ENCODE measurements at regions of chr6 and their contacts with region 1.

Region 1: GRCh38 chr6:99563056-99563723 is 5.3 kb downstream of the CCNC start:
- DNase-seq: no peak
- ATAC-seq: no peak
- H3K4me3 ChIP-seq: no peak overlapping the region
- H3K27ac ChIP-seq: peak overlapping the region in 1 of 12 donors; percentile 7
- H3K4me1 ChIP-seq: peaks cover 0 to 44% (median 23%) of the 10 kb centered on the region in 12 donors
- H3K27me3 ChIP-seq: no peaks in the 10 kb centered on the region
- CTCF ChIP-seq: no peak
- POLR2A ChIP-seq: no peak

Region 2: DNA sequence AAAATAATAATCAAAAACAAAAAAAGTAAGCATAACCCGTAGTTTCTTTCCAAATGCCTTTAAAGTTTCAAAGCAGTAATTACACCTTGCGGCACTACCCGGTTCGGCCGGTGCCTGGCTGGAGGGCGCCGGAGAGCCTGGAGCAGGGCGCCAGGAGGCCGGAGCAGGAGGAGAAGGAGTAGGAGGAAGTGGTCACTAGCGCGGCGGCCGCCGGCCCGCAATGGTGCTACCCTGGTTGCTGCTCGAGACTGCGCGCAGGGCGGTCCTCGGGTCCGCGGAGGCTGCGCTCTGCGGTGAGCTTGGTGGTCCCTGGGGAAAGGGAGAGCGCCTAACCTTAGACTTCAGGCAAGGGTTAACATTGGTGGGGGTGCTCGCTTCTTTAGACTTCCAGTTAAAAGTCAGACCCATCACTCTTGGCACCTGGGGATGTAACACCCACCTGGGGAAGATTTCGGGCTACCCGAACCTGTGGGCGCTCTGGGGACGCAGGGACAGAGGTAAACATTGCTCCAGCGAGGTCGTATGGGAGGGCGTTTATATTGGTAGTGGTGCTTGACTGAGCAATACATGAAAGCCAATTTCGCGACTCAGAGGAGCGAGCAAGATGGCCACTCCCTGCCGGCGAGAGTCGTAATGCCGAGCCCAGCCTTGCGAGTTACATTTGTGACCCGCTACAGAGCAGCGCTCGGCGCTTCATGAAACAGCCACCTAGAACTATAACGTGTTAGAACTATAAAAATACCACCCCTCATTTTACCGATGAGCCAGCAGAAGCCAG is 42.1 kb before region 1 on chr6:
- intact Hi-C with region 1: loop called in 8 of 10 experiments (anchors 1 to 10 kb)
- DNase-seq: peak; percentile 85 to 92 (median 89)
- ATAC-seq: peak; percentile 97 to 99 (median 98)
- H3K4me3 ChIP-seq: peak overlapping the region; percentile 34 to 93 (median 76)
- H3K27ac ChIP-seq: peak overlapping the region; percentile 40 to 93 (median 90)
- H3K4me1 ChIP-seq: peaks cover 0 to 32% (median 6%) of the 10 kb centered on the region in 12 donors
- H3K27me3 ChIP-seq: no peaks in the 10 kb centered on the region
- CTCF ChIP-seq: peak; percentile 73 to 96 (median 89)
- POLR2A ChIP-seq: peak in 1 of 2 donors; percentile 89

Measured in heart left ventricle (tissue), 16 donors.